H1 (cell line): ENCODE measurements at regions of chr1 and their contacts with region 1.

Region 1: GRCh38 chr1:6205849-6206519 is at the start of gene RNF207:
- DNase-seq: peak in 1 of 2 experiments; percentile 87
- H3K4me3 ChIP-seq: peak within 1 kb of the TSS; percentile 35 to 61 (median 48)
- H3K27ac ChIP-seq: no peak within 1 kb of the TSS
- H3K4me1 ChIP-seq: peaks cover 1 to 29% (median 24%) of the 10 kb centered on the region in 4 experiments
- H3K27me3 ChIP-seq: peaks cover 1 to 52% (median 40%) of the 10 kb centered on the region in 4 experiments
- CTCF ChIP-seq: no peak
- EP300 ChIP-seq: no peak
- POLR2A ChIP-seq: 0 out of 3 replicates have a peak, but pooled peaks of 1 of the 2 experiments have one; percentile 36
- RAD21 ChIP-seq: no peak
- total RNA-seq, gene RNF207: 3.9 and 4.2 TPM in 2 replicates

Region 2: DNA sequence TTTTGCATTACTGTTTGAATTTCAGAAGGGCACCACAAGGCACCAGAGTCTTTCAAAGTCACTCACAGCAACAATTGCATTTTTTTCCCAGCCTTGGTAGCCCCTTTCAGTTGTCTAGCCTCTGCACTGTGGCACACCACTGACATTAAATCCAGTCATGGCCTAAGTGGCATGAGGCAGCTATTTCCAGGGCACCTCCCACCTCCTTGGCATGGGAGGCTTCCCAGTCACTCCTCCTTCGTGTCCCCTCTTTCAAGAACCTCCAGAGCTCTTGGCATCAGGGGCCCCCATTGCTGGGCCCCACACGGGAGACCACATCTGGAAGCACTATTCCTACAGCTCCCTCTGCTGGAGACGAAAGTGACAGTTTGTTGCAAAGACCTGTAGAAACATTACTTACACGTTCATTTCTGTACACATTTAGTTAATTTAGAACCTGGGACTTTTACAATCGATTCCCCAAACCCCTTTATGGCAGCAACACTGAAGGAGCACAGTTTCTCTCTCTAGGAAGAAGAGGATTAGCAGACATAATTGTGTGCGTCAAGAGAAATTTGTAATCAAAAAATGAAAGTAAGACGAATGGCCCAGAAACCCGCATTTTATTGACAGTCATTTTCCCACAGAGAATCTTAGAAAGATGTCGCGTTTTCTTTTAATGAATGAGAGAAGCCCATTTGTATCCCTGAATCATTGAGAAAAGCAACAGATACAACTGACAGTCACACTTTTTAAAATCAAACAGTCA is 20.2 kb before region 1 on chr1:
- CTCF ChIA-PET with region 1: interaction called, 41 read pairs
- POLR2A ChIA-PET with region 1: interaction called, 65 read pairs
- DNase-seq: no peak
- H3K4me3 ChIP-seq: no peak overlapping the region
- H3K27ac ChIP-seq: no peak overlapping the region
- H3K4me1 ChIP-seq: peaks cover 7 to 12% (median 8%) of the 10 kb centered on the region in 4 experiments
- H3K27me3 ChIP-seq: peaks cover 0 to 12% (median 6%) of the 10 kb centered on the region in 4 experiments; a peak in 5 of 7 replicates
- CTCF ChIP-seq: peak; percentile 29 to 71 (median 61)
- EP300 ChIP-seq: no peak
- POLR2A ChIP-seq: peak in 1 of 2 experiments; percentile 83; a peak in 2 of 3 replicates
- RAD21 ChIP-seq: peak; percentile 59 to 64

Region 3: GRCh38 chr1:6222636-6223035 is 16.7 kb after region 1 on chr1:
- CTCF ChIA-PET with region 1: interaction called, 74 read pairs
- POLR2A ChIA-PET with region 1: interaction called, 28 read pairs
- DNase-seq: no peak
- H3K4me3 ChIP-seq: no peak overlapping the region
- H3K27ac ChIP-seq: no peak overlapping the region
- H3K4me1 ChIP-seq: no peaks in the 10 kb centered on the region; a peak in 1 of 7 replicates
- H3K27me3 ChIP-seq: no peaks in the 10 kb centered on the region
- CTCF ChIP-seq: no peak
- EP300 ChIP-seq: no peak
- POLR2A ChIP-seq: no peak
- RAD21 ChIP-seq: no peak

Region 4: GRCh38 chr1:6235296-6235677 is 29.3 kb after region 1 on chr1:
- CTCF ChIA-PET with region 1: interaction called, 353 read pairs
- POLR2A ChIA-PET with region 1: interaction called, 78 read pairs
- DNase-seq: no peak
- H3K4me3 ChIP-seq: peak overlapping the region; percentile 77 to 94 (median 86)
- H3K27ac ChIP-seq: peak overlapping the region; percentile 2; the same call in 1 of the 2 replicates
- H3K4me1 ChIP-seq: peaks cover 4 to 25% (median 19%) of the 10 kb centered on the region in 4 experiments
- H3K27me3 ChIP-seq: no peaks in the 10 kb centered on the region
- CTCF ChIP-seq: no peak
- EP300 ChIP-seq: no peak
- POLR2A ChIP-seq: no peak
- RAD21 ChIP-seq: no peak